GM23248 (cell line): ENCODE measurements at regions of chr2 and their contacts with region 1.

Region 1: GRCh38 chr2:191691016-191691735 is 13.2 kb downstream of the NABP1 start:
- DNase-seq: peak; percentile 88
- H3K4me3 ChIP-seq: no peak overlapping the region
- H3K27ac ChIP-seq: peak overlapping the region; percentile 79
- H3K4me1 ChIP-seq: peaks cover 74% of the 10 kb centered on the region
- H3K27me3 ChIP-seq: no peaks in the 10 kb centered on the region

Region 2: DNA sequence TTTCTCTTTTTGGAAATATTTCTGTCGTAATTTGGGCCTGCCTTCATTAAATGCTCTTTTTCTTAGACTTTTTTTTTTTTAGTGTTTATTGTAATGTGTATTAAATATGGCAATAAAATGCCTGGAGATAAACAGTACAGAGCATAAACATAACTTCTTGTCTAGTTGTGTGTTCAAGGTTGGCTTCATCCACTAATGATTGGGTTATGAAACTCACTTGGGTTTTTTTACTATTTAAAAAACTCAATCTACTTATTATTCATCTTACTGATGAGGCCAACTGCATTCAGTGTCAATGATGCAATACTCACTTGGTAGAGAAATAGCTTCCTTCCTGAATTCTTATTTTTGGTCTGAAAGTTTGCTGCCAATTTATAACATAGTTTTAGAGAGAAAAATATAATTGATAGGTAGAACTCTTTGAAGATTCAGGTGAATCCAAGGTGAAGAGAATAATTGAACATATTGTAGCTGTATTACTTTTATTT is 157.4 kb before region 1 on chr2:
- in situ Hi-C with region 1: no loop called
- DNase-seq: peak; percentile 54
- H3K4me3 ChIP-seq: no peak overlapping the region
- H3K27ac ChIP-seq: no peak overlapping the region
- H3K4me1 ChIP-seq: no peaks in the 10 kb centered on the region
- H3K27me3 ChIP-seq: no peaks in the 10 kb centered on the region

Region 3: DNA sequence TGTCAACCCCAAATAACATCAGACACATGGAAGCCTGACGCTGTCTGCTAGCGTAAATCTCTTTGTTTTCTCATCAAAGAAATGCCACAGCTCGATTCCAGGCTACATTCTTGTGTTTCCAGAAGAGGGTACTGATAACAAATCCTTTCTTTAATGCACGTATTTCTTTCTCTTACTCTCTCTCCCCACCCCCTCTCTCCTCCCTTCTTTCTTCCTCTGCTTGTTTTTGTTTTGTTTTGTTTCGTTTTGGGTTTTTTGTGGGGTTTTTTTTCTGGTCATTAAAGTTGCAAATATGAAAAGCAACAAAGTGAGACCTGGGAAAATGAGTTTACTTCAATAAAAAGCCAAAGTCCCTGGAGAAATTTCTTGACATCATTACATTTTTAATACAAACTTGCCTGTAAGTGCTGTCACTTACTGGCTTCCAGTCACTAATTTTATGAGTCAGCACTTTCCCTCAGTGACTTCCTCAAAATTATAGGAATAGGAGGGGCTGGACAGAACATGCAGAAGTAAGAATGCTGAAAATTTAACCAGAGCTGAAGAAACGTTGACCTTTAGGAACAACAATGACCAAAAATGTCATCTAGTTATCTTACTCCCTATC is 119.9 kb before region 1 on chr2:
- in situ Hi-C with region 1: loop called (anchors 5 kb)
- DNase-seq: peak; percentile 74
- H3K4me3 ChIP-seq: peak overlapping the region; percentile 54
- H3K27ac ChIP-seq: peak overlapping the region; percentile 12; the same call in 1 of the 2 replicates
- H3K4me1 ChIP-seq: peaks cover 37% of the 10 kb centered on the region
- H3K27me3 ChIP-seq: no peaks in the 10 kb centered on the region